Right ventricle myocardium inferior (tissue), 1 donor: ENCODE measurements at regions of chr10 and their contacts with region 1.

Region 1: DNA sequence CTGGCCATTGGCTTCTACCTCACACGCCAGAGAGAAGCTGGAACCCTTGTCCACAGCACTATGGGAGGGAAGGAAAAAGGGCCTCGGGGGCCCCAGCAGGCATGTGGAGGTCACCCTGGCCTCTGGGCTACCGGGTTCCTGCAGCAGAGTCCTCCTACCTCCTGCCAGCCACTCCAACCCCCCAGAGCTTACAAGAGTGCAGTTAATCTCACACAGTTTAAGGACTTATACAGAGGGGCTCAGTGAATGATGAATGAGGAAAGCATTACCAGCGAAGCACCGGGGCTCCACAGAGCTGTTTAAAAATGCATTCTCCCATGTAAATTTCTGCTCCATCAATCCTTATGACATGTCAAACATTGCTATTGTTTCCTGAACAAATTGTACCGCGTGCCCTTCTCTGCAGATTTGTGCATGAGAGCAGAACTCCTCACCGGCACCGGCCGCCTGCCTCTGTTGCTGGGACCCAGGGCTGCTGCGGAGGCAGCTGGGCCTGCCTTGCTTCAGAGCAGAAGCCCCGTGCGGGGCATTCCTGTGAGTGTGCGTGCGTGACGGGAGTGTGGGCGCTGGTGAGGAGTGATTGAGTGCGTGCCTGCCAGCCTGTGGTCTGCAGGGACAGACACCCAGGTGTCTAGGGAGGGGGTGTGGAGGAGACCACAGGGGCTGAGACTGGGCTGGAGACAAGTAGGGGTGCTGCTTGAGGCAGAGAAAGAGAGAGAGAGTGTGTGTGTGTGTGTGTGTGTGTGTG is 52.8 kb downstream of the C10orf105 start:
- DNase-seq: no peak
- ATAC-seq: no peak

Region 2: DNA sequence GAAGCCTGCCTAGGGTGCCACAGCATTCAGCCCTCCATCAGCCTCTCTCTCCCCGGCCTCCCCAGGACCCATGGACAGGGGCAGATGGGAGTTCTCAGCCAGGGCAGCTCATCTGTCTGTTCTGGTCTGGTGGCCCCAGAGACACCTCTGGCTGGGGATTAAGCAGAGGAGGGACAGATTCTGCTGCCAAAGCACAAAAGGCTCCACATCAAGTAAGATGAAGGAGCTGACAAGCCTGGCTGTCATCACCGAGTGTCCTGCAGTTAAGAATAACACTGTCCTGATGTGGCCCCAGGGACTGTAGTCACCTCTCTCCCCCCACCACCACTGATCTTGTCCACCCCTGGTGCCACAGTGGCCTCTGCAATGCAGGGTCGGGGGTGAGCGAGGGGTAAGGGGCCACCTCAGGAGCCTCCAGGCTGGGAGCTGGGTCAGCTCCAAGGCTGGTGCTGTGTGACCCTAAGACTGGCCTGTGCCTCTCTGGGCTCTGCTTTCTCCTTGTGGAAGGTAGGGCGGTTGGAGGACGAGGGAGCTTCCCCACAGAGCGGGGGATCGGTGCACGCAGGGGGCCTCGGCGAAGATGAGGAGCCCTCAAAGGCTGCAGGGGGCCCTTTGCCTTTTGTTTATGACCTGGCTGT is 34.0 kb after region 1 on chr10:
- intact Hi-C with region 1: loop called (anchors 5 kb)
- DNase-seq: no peak
- ATAC-seq: peak; percentile 64